Posterior vena cava (tissue), 2 donors: ENCODE measurements at regions of chr5 and their contacts with region 1.

Region 1: GRCh38 chr5:32232441-32233219 is 58.5 kb upstream of the GOLPH3 start:
- DNase-seq: peak; percentile 90

Region 2: GRCh38 chr5:32329308-32329834 is 96.7 kb after region 1 on chr5:
- intact Hi-C with region 1: loop called (anchors 5 kb)
- DNase-seq: peak; percentile 86